HEK293T (cell line): ENCODE measurements at regions of chr4 and their contacts with region 1.

Region 1: GRCh38 chr4:180664766-180665368 is 1578.3 kb upstream of the TENM3 start:
- DNase-seq: peak; percentile 45

Region 2: GRCh38 chr4:179867300-179867878 is 797.5 kb before region 1 on chr4:
- CTCF ChIA-PET with region 1: interaction called, 11 read pairs
- POLR2A ChIA-PET with region 1: no interaction called
- DNase-seq: peak; percentile 76

Region 3: GRCh38 chr4:180363815-180364214 is 301.1 kb before region 1 on chr4:
- CTCF ChIA-PET with region 1: interaction called, 13 read pairs
- POLR2A ChIA-PET with region 1: no interaction called
- DNase-seq: no peak

Region 4: DNA sequence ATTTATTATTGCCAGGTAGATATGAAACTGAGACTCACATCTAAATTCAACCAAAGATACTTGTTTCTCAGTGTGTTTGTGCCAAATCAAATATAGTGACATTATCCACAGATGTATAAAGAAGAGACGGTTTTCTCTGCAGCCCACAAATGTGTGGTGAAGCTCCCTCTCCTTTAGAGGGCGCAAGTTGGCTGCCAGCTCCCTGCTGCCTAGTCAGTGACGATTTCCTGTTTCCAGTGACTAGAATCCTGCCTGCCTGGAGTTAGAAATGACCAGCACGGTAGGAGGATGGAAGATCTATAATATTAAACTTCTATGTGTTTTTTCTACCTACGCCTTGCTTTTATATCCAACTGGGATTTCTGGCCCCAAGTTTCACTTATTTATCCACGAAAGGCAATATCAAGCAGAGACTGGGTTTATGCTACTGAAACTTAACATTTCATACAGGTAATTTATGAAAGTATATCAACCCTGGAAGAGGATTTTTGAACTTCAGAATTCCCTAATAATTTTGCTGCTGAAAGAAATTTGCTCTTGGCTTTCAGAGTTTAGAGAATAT is 215.4 kb before region 1 on chr4:
- CTCF ChIA-PET with region 1: interaction called, 10 read pairs
- POLR2A ChIA-PET with region 1: no interaction called
- DNase-seq: peak; percentile 79